CD4-positive, alpha-beta T cell (primary cell): ENCODE measurements at regions of chr20 and their contacts with region 1.

Region 1: DNA sequence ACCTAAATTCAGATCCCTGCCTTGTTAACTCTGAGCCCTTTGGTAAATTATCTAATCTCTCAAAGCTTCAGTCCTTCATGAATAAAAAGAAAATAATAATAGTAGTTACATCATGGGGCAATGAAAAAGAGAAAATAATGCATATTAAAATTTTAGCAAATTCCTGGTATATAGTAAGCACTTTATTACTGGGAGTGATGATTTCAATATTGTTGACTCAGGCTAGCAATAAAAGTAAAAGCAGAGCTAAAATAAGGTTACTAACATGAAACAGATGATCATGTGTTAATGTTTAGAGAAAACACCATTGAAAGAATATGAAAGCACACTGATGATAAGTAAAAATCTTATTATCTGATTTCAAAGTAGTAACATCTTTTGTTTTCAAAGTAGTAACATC is 13.6 kb downstream of the GINS1 start:
- DNase-seq: no peak
- ATAC-seq: no peak
- H3K4me3 ChIP-seq: no peak overlapping the region
- H3K4me3 Mint-ChIP-seq: no peak overlapping the region
- H3K27ac ChIP-seq: no peak overlapping the region
- H3K27ac Mint-ChIP-seq: no peak overlapping the region
- H3K4me1 ChIP-seq: no peaks in the 10 kb centered on the region
- H3K4me1 Mint-ChIP-seq: no peaks in the 10 kb centered on the region
- H3K27me3 ChIP-seq: no peaks in the 10 kb centered on the region
- H3K27me3 Mint-ChIP-seq: no peaks in the 10 kb centered on the region
- CTCF ChIP-seq: no peak

Region 2: GRCh38 chr20:25372584-25373336 is 48.3 kb before region 1 on chr20:
- CTCF ChIA-PET with region 1: no interaction called
- POLR2A ChIA-PET with region 1: no interaction called
- intact Hi-C with region 1: loop called in 1 of 2 experiments (anchors 10 kb)
- DNase-seq: no peak
- ATAC-seq: no peak
- H3K4me3 ChIP-seq: no peak overlapping the region
- H3K4me3 Mint-ChIP-seq: no peak overlapping the region
- H3K27ac ChIP-seq: no peak overlapping the region
- H3K27ac Mint-ChIP-seq: no peak overlapping the region
- H3K4me1 ChIP-seq: no peaks in the 10 kb centered on the region
- H3K4me1 Mint-ChIP-seq: peaks cover 14% of the 10 kb centered on the region
- H3K27me3 ChIP-seq: no peaks in the 10 kb centered on the region
- H3K27me3 Mint-ChIP-seq: no peaks in the 10 kb centered on the region
- CTCF ChIP-seq: no peak